Cardiac septum (tissue), 1 donor: ENCODE measurements at regions of chr11 and their contacts with region 1.

Region 1: GRCh38 chr11:43579171-43579918 is 101.2 kb upstream of the HSD17B12 start:
- DNase-seq: no peak

Region 2: GRCh38 chr11:43486141-43486540 is 93.2 kb before region 1 on chr11:
- intact Hi-C with region 1: no loop called
- DNase-seq: no peak

Region 3: DNA sequence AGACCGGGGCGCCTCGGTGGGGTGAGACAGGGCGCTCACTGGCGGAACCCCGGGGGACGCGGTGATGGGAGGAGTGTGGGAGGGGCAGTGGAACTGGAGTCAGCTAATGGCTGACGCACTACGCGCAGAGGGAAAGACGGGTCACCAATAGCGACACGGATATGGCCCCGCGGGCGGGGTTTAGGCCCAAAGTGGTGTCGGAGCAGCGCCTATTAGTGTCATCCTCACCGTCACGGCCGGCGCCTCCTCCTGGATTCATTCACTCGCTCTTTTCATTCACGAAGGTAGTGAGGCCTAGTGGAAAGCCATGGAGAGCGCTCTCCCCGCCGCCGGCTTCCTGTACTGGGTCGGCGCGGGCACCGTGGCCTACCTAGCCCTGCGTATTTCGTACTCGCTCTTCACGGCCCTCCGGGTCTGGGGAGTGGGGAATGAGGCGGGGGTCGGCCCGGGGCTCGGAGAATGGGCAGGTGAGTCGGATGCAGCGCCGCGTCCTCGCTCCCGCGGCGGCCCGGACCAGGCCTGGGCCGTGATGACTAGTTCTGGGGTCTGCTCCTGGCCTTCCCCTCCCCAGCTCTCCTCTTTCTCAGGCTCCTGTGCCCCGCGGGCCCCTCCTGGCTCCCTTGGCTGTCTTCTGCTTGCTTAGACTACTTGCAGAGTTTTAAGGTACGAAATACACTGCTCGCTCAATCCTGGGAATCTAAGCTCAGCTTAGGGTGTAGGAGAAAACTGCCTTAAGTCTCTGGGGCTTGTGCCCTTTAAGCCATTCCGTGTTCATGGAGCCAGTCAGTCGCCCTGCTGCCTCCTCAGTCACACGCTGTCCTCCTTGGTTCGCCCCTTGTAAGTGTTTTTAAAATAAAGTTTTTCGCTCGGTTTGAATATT is 101.4 kb after region 1 on chr11 and contains the start of gene HSD17B12:
- intact Hi-C with region 1: loop called (anchors 10 kb)
- DNase-seq: peak; percentile 100
- total RNA-seq, gene HSD17B12: 88.0 TPM

Region 4: GRCh38 chr11:43708776-43709175 is 129.4 kb after region 1 on chr11:
- intact Hi-C with region 1: loop called (anchors 5 kb)
- DNase-seq: no peak

Region 5: DNA sequence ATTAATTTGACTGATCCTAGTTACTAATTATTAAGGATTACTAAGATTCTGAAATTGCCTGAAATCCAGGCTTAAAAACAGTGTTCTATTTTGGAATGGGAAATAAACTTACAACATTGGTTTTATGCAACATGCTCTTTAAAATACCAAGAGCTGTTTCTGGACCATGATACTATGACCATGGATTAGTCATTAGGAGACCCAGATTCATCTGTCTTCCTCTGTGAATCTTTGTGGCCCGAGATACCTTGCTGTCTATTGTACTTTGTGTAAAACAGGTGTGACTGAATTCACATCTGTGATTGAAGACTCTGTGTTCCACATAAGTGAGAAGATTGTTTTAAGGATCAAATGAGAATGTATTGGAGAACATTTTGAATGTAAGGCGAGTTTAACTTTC is 200.0 kb after region 1 on chr11:
- intact Hi-C with region 1: no loop called
- DNase-seq: no peak

Region 6: DNA sequence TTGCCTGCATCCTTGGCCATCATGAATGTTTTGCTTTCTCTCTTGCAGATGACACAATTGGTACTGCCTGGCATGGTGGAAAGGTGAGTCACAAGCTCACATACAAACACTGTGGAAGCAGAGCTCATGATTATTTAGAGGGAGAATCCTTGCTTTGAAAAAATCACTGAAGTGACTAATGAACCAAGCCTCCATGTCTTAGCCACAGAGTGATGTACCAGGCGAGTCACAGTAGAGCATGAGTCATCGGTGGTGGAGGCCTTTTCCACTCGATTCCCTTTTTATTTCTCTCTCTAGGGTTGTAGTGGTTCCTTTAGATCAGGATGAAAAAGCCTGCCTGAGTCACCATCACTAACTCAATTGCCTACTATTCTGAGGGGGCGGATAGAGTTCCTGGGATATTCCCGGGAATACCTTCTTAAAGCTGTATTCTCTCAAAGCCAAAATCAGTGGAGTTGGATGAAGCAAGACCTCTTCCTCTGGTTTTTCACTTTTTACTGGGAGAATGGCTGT is 251.6 kb after region 1 on chr11:
- intact Hi-C with region 1: loop called (anchors 10 kb)
- DNase-seq: no peak

Region 7: GRCh38 chr11:44036811-44037657 is 457.7 kb after region 1 on chr11:
- intact Hi-C with region 1: loop called (anchors 10 kb)
- DNase-seq: peak; percentile 87